ENCODE measurements at regions of chr22 and their contacts with region 1.

Region 1: GRCh38 chr22:17742527-17742902 is 31.8 kb downstream of the BID start:
- DNase-seq: peak; percentile 58 to 61
- ATAC-seq: peak in 7 of 8 donors; percentile 50 to 77 (median 70)
- H3K4me3 ChIP-seq: no peak overlapping the region
- H3K27ac ChIP-seq: no peak overlapping the region
- H3K4me1 ChIP-seq: peaks cover 0 to 22% (median 14%) of the 10 kb centered on the region in 9 donors
- H3K27me3 ChIP-seq: no peaks in the 10 kb centered on the region
- CTCF ChIP-seq: peak; percentile 62 to 83 (median 75)

Region 2: GRCh38 chr22:17552737-17553136 is 189.8 kb before region 1 on chr22:
- intact Hi-C with region 1: loop called in 2 of 10 experiments (anchors 5 to 10 kb)
- DNase-seq: peak in 1 of 2 donors; percentile 39
- ATAC-seq: peak in 7 of 8 donors; percentile 38 to 81 (median 58)
- H3K4me3 ChIP-seq: no peak overlapping the region
- H3K27ac ChIP-seq: peak overlapping the region in 1 of 10 donors; percentile 12
- H3K4me1 ChIP-seq: no peaks in the 10 kb centered on the region
- H3K27me3 ChIP-seq: no peaks in the 10 kb centered on the region
- CTCF ChIP-seq: no peak

Region 3: DNA sequence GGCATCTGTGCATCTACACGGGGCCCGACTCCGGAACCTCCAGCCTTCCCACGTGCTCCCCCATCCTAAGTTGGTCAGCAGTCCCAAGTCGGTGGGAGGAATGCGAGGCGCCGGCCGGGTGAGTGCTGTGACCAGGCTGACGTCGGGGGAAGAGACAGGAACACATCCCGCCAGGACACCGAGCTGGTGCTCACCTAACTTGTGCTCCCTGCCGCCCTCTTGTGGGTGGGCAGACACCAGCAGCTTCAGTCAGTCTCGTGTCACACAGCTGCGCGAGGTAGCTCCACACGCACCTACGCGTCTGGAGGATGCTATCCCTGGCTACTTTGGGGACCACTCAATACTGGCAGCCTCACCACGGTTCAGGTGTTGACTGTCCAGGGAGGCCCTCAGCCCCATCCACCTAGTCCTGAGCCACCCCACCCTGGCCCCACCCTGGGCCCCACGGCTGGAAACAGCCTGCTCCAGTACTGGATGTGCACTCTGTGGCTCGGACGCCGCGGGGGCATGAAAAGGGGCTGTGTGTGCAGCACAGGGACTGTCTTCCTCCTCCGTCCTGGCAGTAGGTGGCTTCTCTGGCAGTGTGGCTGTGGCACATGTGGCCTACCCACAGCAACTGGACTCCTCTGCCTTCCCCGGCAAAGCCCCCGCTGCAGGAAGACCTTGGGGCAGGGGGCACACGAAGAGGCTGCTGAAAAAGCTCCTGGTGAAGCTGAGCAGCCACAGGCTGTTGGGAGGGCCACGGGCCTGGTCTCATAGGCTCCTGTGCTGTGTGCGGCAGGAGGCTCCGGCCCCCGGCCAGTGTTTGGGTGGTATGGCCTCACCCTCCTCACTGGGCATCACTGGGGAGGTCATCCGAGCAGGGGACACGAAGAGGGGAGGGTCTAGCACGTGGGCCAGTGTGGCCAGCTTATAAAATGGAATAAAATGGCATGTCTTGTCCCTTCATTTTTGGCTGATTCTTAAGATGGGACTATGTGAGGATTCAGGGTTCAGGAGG is 43.0 kb after region 1 on chr22:
- intact Hi-C with region 1: loop called in 3 of 10 experiments (anchors 2 to 10 kb)
- DNase-seq: peak; percentile 45 to 62
- ATAC-seq: peak in 5 of 8 donors; percentile 4 to 28 (median 17)
- H3K4me3 ChIP-seq: no peak overlapping the region
- H3K27ac ChIP-seq: peak overlapping the region in 9 of 10 donors; percentile 79 to 93 (median 86)
- H3K4me1 ChIP-seq: peaks cover 11 to 43% (median 37%) of the 10 kb centered on the region in 9 donors
- H3K27me3 ChIP-seq: no peaks in the 10 kb centered on the region
- CTCF ChIP-seq: peak; percentile 12 to 67 (median 56)

Region 4: GRCh38 chr22:17867160-17867785 is 124.8 kb after region 1 on chr22:
- intact Hi-C with region 1: no loop called
- DNase-seq: peak; percentile 73 to 76
- ATAC-seq: peak; percentile 44 to 86 (median 68)
- H3K4me3 ChIP-seq: no peak overlapping the region
- H3K27ac ChIP-seq: peak overlapping the region in 8 of 10 donors; percentile 13 to 59 (median 42)
- H3K4me1 ChIP-seq: peaks cover 7 to 51% (median 22%) of the 10 kb centered on the region in 9 donors
- H3K27me3 ChIP-seq: no peaks in the 10 kb centered on the region
- CTCF ChIP-seq: peak in 2 of 9 donors; percentile 9 to 15

Region 5: DNA sequence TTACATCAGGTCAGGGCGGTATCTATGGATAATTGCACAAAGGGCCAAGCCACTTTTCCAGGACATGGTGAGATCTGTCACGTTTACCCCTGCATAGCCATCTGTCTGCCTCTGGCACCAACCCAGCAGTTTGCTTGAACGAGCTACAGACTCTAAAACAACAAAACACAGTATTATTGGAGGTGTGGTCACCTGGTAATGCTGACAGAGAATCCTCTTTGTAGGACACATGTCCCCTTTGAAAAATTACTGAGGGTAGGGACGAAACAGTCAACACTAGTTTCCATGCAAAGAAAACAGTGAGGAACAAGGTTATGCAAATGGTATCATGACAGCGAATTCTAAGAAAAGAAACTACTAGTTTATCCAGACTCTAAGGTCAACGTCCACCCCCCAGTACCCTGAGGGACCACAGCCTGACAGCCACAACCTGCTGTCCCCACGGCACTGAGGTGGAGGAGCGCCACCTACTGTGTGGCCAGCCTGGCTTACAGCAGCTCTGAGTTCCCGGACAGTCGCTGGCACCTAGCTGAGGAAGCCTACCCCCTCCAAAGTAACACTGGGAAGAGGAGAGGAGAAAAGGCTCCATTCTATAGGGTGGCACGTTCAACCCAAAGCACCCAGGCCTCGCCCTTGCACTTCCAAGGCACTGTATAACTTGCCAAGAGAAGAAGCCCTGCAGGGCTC is 149.1 kb after region 1 on chr22:
- intact Hi-C with region 1: loop called in 1 of 10 experiments (anchors 10 kb)
- DNase-seq: peak; percentile 65 to 69
- ATAC-seq: peak; percentile 72 to 86 (median 80)
- H3K4me3 ChIP-seq: no peak overlapping the region
- H3K27ac ChIP-seq: peak overlapping the region in 9 of 10 donors; percentile 36 to 84 (median 75)
- H3K4me1 ChIP-seq: peaks cover 5 to 50% (median 27%) of the 10 kb centered on the region in 9 donors
- H3K27me3 ChIP-seq: no peaks in the 10 kb centered on the region
- CTCF ChIP-seq: peak; percentile 17 to 73 (median 51)

Region 6: DNA sequence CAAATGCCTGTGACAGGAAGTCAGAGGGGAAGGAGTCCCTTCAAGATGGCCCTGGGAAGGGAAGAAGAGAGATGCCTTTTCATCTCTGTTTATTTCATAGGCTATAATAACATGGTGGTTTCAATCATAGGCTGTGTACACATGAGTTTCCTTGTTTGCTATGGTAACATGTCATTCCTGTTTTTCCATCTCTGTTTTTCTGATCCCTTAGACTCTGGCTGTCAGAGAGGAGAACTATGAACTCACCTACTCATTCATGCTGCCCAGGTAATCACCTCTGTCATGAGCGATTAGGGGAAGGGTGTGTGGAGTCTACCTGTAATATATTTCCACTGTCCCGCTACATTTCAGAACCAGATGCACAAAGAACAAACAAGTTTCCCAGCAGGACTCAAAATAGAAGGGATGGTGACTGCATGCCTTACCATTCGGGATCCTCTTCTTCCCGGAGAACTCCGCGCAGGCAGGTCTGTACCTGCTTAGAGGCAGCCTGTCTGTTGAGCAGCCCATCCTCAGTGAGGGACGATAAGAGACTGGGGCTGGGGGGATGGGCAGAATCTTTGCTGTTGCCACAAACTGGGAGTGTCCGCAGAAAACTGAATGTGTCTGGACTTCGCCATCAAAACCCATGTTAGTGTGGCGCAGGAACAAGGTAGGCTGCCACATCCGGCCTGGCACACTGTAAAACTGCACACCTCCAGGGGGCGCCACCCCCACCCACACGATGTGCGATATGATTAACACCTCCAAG is 328.2 kb after region 1 on chr22:
- intact Hi-C with region 1: loop called in 6 of 10 experiments (anchors 5 to 10 kb)
- DNase-seq: no peak
- ATAC-seq: no peak
- H3K4me3 ChIP-seq: no peak overlapping the region
- H3K27ac ChIP-seq: no peak overlapping the region
- H3K4me1 ChIP-seq: peaks cover 0 to 38% (median 7%) of the 10 kb centered on the region in 9 donors
- H3K27me3 ChIP-seq: peaks cover 0 to 7% (median 0%) of the 10 kb centered on the region in 7 donors
- CTCF ChIP-seq: peak in 4 of 9 donors; percentile 9 to 23 (median 13)